ENCODE measurements at regions of chr2 and their contacts with region 1.

Region 1: DNA sequence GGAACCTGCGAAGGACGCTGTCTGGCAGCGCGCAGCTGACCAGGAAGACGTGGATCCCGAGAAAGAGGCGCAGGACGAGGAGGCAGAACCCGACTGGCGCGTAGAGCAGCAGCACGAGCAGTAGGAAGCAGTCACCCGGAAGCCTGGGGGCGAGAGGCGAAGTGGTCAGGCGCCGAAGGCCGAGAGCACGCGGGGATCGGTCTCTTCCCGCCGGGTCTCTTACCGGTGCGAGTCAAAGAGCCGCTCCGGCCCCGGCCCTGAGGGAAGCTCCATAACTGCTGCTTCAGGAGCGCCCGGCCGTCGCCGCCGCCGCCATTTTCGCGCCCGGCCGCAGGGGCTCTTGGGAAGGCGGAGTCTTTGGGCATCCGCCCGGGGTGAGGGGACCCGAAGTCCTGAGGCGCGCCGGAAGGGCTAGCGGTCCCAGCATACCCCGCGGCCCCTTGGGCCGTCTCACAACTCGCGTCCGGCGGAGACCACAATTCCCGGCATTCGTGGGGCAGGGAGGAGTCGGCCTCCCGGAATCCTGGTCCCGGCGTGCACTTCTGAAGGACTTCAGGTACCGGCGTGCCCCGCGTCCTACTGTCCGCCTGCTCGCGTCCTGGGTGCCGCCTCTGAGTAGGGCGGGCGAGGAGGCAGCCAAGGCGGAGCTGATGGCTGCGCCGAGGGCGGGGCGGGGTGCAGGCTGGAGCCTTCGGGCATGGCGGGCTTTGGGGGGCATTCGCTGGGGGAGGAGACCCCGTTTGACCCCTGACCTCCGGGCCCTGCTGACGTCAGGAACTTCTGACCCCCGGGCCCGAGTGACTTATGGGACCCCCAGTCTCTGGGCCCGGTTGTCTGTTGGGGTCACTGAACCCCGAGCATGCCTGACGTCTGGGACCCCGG is at the starts of genes AUP1 and HTRA2:
- DNase-seq: peak; percentile 94 to 95
- H3K4me3 ChIP-seq: peak within 1 kb of the TSS; percentile 85 to 99 (median 92)
- H3K27ac ChIP-seq: peak within 1 kb of the TSS; percentile 90
- H3K4me1 ChIP-seq: peaks cover 4 to 13% (median 6%) of the 10 kb centered on the region in 4 experiments; a peak in 6 of 7 replicates
- H3K27me3 ChIP-seq: no peaks in the 10 kb centered on the region; a peak in 1 of 7 replicates
- CTCF ChIP-seq: no peak
- EP300 ChIP-seq: peak in 1 of 2 experiments; percentile 5; a peak in 1 of 3 replicates
- POLR2A ChIP-seq: peak in 1 of 2 experiments; percentile 94; a peak in 2 of 3 replicates
- RAD21 ChIP-seq: 0 out of 4 replicates have a peak, but pooled peaks of 1 of the 2 experiments have one; percentile 3
- total RNA-seq, gene AUP1: 82.7 and 83.4 TPM in 2 replicates
- total RNA-seq, gene HTRA2: 21.6 and 24.6 TPM in 2 replicates

Region 2: DNA sequence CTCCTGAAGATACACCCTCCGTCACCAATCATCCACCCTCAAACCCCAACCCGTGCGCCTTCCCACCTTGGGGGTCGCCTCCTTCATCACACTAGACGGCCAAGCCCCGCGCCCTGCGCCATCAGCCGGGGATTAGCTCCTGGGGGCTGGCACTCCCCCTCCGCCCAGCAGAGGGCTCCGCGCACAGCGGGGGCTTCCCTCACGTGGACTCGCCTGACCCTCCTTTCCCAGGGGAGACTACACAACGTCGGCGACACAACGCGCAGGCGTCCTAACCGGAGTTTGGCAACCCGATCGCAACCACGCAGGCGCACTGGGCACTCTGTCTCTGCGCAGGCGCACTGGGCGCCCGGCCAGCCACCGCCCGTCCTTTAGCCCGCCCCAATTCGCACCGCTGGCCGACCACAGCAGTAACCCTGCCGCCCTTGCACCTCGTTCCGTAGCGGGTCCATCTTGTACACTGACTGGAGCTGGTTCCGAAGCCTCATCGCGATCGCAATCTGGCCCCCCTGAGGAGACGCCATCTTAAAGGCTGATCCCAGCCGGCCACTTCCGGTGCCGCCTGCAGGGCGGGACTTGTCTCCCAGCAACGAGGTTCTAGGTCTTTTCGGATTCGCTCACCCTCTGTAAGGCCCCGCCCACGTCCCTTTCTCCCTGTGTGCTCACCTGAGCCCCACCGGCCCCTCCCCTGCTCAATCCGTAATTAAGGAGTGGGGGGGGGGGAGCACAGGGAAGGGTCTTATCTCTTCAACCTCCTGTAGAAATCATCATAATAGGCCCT is 22.3 kb before region 1 on chr2 and contains the start of gene PCGF1:
- CTCF ChIA-PET with region 1: interaction called, 11 read pairs
- POLR2A ChIA-PET with region 1: interaction called, 73 read pairs
- DNase-seq: peak; percentile 96 to 98
- H3K4me3 ChIP-seq: peak within 1 kb of the TSS; percentile 61 to 98 (median 92)
- H3K27ac ChIP-seq: peak within 1 kb of the TSS; percentile 99
- H3K4me1 ChIP-seq: peaks cover 3 to 25% (median 20%) of the 10 kb centered on the region in 4 experiments
- H3K27me3 ChIP-seq: peaks cover 48 to 80% (median 76%) of the 10 kb centered on the region in 4 experiments
- CTCF ChIP-seq: peak in 2 of 3 experiments; percentile 48 to 63; a peak in 3 of 4 replicates
- EP300 ChIP-seq: no peak
- POLR2A ChIP-seq: peak in 1 of 2 experiments; percentile 84; a peak in 2 of 3 replicates
- RAD21 ChIP-seq: peak; percentile 9 to 28; a peak in 1 of 4 replicates
- total RNA-seq, gene PCGF1: 10.0 and 13.8 TPM in 2 replicates

Region 3: DNA sequence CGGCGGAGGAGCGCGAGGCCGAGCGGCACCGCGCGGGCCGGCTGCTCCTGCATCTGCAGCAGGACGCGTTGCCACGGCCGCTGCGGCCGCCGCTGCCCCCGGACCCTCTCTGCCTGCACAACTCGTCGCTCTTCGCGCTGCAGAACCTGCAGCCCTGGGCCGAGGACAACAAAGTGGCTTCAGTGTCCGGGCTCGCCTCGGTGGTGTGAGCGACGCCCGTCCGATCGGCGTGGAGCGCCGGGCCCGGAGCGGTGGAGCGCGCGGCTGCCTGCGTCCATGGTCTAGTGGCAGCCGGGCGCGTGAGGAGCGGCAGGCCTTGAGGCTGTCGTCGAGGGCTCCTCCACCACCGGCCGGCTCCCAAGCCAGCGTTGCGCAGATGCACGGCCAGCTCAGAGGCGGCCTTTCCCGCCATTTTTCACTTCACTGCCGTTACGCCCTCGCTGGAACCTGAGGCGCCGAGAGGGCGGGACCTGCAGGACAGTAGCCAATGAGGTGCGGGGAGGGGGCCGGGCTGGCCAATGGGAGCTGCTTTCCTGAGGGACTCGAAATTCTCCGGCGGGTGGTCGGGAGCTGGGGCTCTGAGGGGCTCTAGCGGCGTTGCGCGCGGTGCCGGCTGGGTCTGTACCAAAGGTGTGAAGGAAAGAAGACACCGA is 13.5 kb before region 1 on chr2:
- CTCF ChIA-PET with region 1: interaction called, 7 read pairs
- POLR2A ChIA-PET with region 1: interaction called, 25 read pairs
- DNase-seq: peak in 1 of 2 experiments; percentile 95
- H3K4me3 ChIP-seq: peak overlapping the region in 1 of 4 experiments; percentile 62; a peak in 3 of 8 replicates
- H3K27ac ChIP-seq: no peak overlapping the region
- H3K4me1 ChIP-seq: peaks cover 0 to 24% (median 10%) of the 10 kb centered on the region in 4 experiments; a peak in 6 of 7 replicates
- H3K27me3 ChIP-seq: peaks cover 68 to 93% (median 89%) of the 10 kb centered on the region in 4 experiments
- CTCF ChIP-seq: no peak
- EP300 ChIP-seq: no peak
- POLR2A ChIP-seq: no peak
- RAD21 ChIP-seq: no peak

Region 4: DNA sequence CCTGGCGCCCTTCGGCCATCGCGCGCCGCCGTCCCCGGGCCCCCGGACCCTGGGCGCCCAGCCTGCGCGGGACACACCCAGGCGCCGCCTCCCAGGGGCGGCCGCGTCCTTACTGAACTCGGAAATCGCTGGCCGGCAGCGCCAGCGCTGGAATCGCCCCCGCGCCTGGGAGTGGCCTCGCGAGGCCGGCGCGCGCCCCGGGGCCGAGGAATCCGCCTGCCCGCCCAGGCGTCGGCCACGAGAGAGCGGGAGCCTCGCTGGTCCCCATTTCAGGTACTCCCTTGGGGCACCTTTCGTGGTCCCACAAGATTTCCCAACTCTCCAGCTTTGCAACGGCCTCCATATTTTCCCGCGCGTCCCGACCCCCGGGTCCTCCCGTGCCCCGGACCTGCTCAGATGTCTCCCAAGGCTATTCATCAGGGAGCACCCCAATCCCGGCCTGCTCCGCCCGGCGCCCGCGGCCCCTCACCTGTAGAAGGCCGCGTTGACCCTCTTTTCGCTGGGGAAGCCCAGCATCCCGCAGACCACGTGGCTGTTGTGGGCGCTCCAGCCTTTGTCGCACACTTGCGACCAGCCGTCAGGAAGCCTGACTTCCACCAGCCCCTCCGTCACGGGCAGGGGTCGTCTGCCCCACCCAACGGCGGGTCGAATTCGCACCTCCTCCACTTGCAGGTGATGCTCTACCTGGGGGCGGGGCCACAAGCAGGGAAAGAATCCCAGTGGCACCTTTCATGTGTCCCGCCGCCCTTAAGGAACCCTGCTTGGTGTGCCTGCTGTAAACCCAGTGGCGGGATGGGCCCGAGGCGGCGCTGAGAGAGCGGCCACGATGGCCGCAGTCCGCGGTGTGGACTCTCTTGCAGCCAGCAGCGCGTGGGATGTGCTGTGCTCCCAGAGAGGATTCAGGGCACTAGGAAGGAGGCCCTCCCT is 19.6 kb after region 1 on chr2:
- CTCF ChIA-PET with region 1: interaction called, 4 read pairs
- POLR2A ChIA-PET with region 1: interaction called, 39 read pairs
- DNase-seq: peak in 1 of 2 experiments; percentile 87
- H3K4me3 ChIP-seq: peak overlapping the region; percentile 62 to 90 (median 71)
- H3K27ac ChIP-seq: peak overlapping the region; percentile 11; the same call in 1 of the 2 replicates
- H3K4me1 ChIP-seq: peaks cover 5 to 18% (median 7%) of the 10 kb centered on the region in 4 experiments
- H3K27me3 ChIP-seq: peaks cover 4 to 59% (median 28%) of the 10 kb centered on the region in 4 experiments
- CTCF ChIP-seq: no peak; a peak in 1 of 4 replicates
- EP300 ChIP-seq: no peak
- POLR2A ChIP-seq: peak in 1 of 2 experiments; percentile 63; a peak in 2 of 3 replicates
- RAD21 ChIP-seq: no peak; a peak in 1 of 4 replicates

Region 5: GRCh38 chr2:74554646-74555531 is 25.3 kb after region 1 on chr2 and contains the start of gene DOK1:
- CTCF ChIA-PET with region 1: interaction called, 3 read pairs
- POLR2A ChIA-PET with region 1: interaction called, 17 read pairs
- DNase-seq: peak in 1 of 2 experiments; percentile 76
- H3K4me3 ChIP-seq: peak within 1 kb of the TSS; percentile 83 to 94 (median 90)
- H3K27ac ChIP-seq: 0 out of 2 replicates have a peak within 1 kb of the TSS, but pooled peaks have one; percentile 11
- H3K4me1 ChIP-seq: peaks cover 2 to 10% (median 7%) of the 10 kb centered on the region in 4 experiments
- H3K27me3 ChIP-seq: peaks cover 4 to 50% (median 33%) of the 10 kb centered on the region in 4 experiments
- CTCF ChIP-seq: no peak
- EP300 ChIP-seq: no peak
- POLR2A ChIP-seq: no peak; a peak in 1 of 3 replicates
- RAD21 ChIP-seq: no peak
- total RNA-seq, gene DOK1: 11.4 and 14.3 TPM in 2 replicates

Region 6: DNA sequence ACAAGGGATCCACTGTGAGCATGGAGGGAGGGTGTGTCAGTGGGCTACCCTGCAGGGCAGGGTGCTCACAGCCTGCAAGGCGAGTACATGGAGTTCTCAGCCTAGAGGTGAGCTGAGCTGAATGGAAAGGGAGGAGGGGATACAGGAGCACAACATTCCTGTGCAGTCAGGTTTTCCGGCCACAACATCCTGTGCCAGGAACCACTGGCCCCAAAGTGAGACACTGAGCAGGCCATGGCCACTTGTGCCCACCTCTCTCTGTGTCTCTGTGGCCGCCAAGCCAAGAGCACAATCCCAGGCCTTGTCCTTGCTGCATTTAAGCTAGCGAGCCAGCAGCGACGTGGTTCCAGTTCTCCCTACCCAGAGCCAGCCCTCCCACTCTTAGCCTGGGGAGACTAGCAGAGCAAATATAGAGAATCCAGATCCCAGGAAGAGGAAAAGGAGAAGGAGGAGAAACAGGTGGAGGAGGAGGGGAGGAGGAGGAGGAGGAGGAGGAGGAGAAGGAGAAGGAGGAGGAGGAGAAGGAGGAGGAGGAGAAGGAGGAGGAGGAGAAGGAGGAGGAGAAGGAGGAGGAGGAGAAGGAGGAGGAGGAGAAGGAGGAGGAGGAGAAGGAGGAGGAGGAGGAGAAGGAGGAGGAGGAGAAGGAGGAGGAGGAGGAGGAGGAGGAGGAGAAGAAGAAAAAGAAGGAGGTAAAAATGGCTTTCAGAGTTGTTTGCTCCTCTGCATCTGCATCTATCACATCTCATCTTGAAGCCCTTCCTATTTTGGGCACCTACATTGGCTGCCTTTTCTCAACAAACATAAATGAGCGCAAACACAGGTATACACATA is 31.2 kb after region 1 on chr2:
- CTCF ChIA-PET with region 1: interaction called, 3 read pairs
- POLR2A ChIA-PET with region 1: interaction called, 16 read pairs
- DNase-seq: no peak
- H3K4me3 ChIP-seq: no peak overlapping the region
- H3K27ac ChIP-seq: no peak overlapping the region
- H3K4me1 ChIP-seq: peaks cover 0 to 6% (median 3%) of the 10 kb centered on the region in 4 experiments; a peak in 6 of 7 replicates
- H3K27me3 ChIP-seq: peaks cover 0 to 19% (median 13%) of the 10 kb centered on the region in 4 experiments; a peak in 6 of 7 replicates
- CTCF ChIP-seq: no peak
- EP300 ChIP-seq: no peak
- POLR2A ChIP-seq: no peak
- RAD21 ChIP-seq: no peak